Psoas muscle (tissue), 8 donors: ENCODE measurements at regions of chr2 and their contacts with region 1.

Region 1: GRCh38 chr2:68441179-68441993 is 25.7 kb downstream of the FBXO48 start:
- DNase-seq: peak; percentile 75 to 76
- ATAC-seq: peak; percentile 81 to 98 (median 86)
- H3K4me3 ChIP-seq: no peak overlapping the region
- H3K27ac ChIP-seq: no peak overlapping the region
- H3K4me1 ChIP-seq: no peaks in the 10 kb centered on the region
- H3K27me3 ChIP-seq: no peaks in the 10 kb centered on the region
- CTCF ChIP-seq: peak; percentile 91

Region 2: GRCh38 chr2:68121873-68122679 is 319.3 kb before region 1 on chr2:
- intact Hi-C with region 1: loop called (anchors 1 to 5 kb)
- DNase-seq: peak; percentile 86 to 90
- ATAC-seq: peak; percentile 72 to 94 (median 88)
- H3K4me3 ChIP-seq: peak overlapping the region; percentile 3
- H3K27ac ChIP-seq: no peak overlapping the region
- H3K4me1 ChIP-seq: peaks cover 4% of the 10 kb centered on the region
- H3K27me3 ChIP-seq: no peaks in the 10 kb centered on the region
- CTCF ChIP-seq: peak; percentile 96

Region 3: DNA sequence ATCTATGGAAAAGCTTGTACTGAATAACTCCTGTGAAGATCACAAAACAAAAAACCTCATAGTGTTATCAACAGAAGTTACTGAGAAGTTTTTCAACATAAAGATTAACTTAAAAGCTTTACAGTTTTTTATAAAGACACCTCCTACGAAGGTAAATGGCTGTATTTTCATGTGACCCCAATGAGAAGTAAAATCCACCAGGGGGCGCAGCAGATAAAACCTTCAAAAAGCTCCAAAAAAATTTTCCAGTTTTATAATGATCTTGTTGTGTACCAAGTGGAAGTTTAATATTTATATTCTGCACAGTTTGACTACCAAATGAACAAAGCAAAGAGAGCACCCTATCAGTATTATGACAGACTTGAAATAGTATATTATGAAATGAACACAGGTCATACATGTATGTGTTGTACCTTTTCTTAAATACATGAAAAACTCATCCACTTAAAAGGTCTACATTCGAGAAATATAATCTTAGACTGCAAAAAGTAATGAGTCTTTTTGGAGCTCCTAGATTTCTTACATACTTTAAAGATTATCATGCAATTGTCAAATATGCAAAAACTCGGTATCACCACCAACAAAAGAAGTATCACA is 245.2 kb before region 1 on chr2:
- intact Hi-C with region 1: loop called in 1 of 2 experiments (anchors 10 kb)
- DNase-seq: no peak
- ATAC-seq: peak in 2 of 4 donors; percentile 25 to 44
- H3K4me3 ChIP-seq: no peak overlapping the region
- H3K27ac ChIP-seq: no peak overlapping the region
- H3K4me1 ChIP-seq: peaks cover 66% of the 10 kb centered on the region
- H3K27me3 ChIP-seq: no peaks in the 10 kb centered on the region
- CTCF ChIP-seq: peak; percentile 84

Region 4: DNA sequence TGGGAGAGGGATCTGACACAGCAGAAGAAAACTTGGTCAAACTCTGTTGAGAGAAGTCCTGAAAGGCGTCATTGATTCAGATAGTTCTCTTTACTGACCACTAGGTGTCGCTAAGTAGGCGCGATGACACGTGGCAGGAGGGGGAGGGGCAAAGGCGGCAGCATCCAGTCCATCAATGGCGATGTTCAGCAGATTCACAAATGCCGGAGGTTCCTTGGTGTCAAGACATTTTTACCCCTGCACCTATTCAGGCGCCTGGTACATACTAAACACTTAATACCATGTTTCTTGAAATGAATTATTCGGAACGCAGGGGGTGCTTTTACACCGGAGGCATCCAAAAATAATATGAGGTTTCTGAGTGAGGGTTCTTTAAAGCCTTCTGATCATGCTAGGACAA is 79.3 kb before region 1 on chr2:
- intact Hi-C with region 1: loop called in 1 of 2 experiments (anchors 5 kb)
- DNase-seq: peak; percentile 69 to 81
- ATAC-seq: peak; percentile 22 to 76 (median 38)
- H3K4me3 ChIP-seq: no peak overlapping the region
- H3K27ac ChIP-seq: no peak overlapping the region
- H3K4me1 ChIP-seq: no peaks in the 10 kb centered on the region
- H3K27me3 ChIP-seq: no peaks in the 10 kb centered on the region
- CTCF ChIP-seq: peak; percentile 63